ENCODE measurements at regions of chr14 and their contacts with region 1.

Region 1: DNA sequence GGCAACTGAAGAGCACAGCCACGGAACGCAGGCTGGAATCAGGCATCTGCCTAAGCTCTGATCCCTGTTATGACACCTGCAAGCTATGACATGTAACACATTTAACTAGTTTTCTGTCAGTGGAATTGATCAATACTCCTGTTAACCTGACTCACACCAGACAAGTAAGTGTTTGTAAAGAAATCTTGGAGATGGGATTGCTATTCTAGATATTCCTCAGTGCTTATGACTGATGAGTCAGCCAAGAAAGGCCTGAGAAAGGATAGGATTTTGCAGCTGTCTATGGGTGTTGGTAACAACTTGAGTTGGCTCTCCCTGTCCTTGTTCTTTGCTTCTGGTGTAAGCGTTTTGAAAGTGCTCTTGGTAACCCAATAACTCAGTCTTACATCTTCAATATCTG is 110.5 kb downstream of the GPR135 start:
- DNase-seq: peak; percentile 85
- H3K4me3 Mint-ChIP-seq: no peak overlapping the region
- H3K27ac Mint-ChIP-seq: peak overlapping the region; percentile 46
- H3K4me1 Mint-ChIP-seq: peaks cover 43% of the 10 kb centered on the region
- H3K27me3 Mint-ChIP-seq: no peaks in the 10 kb centered on the region
- CTCF ChIP-seq: no peak

Region 2: GRCh38 chr14:59262717-59263454 is 91.8 kb before region 1 on chr14:
- CTCF ChIA-PET with region 1: no interaction called
- POLR2A ChIA-PET with region 1: no interaction called
- intact Hi-C with region 1: no loop called
- DNase-seq: no peak
- H3K4me3 Mint-ChIP-seq: no peak overlapping the region
- H3K27ac Mint-ChIP-seq: no peak overlapping the region
- H3K4me1 Mint-ChIP-seq: peaks cover 6% of the 10 kb centered on the region
- H3K27me3 Mint-ChIP-seq: no peaks in the 10 kb centered on the region
- CTCF ChIP-seq: no peak

Region 3: GRCh38 chr14:59343585-59343984 is 11.1 kb before region 1 on chr14:
- CTCF ChIA-PET with region 1: interaction called, 6 read pairs
- POLR2A ChIA-PET with region 1: interaction called, 90 read pairs
- intact Hi-C with region 1: no loop called
- DNase-seq: peak; percentile 41
- H3K4me3 Mint-ChIP-seq: no peak overlapping the region
- H3K27ac Mint-ChIP-seq: no peak overlapping the region
- H3K4me1 Mint-ChIP-seq: peaks cover 24% of the 10 kb centered on the region
- H3K27me3 Mint-ChIP-seq: no peaks in the 10 kb centered on the region
- CTCF ChIP-seq: no peak